ENCODE measurements at regions of chr1 and their contacts with region 1.

Region 1: DNA sequence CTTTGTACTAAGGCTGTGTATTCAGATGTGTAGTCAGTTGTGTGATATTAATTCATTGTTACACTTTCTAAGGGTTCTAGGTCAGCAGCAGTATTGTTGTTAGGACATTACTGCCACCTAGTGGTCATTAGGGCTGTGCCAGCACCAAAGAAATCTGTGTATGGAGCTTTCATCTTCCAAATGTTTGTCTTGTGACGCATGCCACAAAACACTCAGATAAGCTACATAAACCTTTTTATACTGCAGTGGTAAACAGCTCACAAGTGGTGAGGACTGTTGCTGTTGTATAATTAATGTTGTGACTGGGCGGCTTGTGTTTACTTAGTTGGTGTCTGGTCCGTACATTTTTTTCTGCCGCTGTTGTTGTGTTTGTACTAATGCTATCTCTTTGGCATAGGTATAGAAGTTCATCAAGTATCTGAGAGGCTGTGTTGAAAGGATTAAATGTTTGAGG is 51.7 kb downstream of the S1PR1 start:
- DNase-seq: peak; percentile 48 to 61
- H3K4me3 ChIP-seq: no peak overlapping the region
- H3K4me3 Mint-ChIP-seq: no peak overlapping the region
- H3K27ac Mint-ChIP-seq: no peak overlapping the region
- H3K4me1 ChIP-seq: no peaks in the 10 kb centered on the region
- H3K4me1 Mint-ChIP-seq: no peaks in the 10 kb centered on the region
- H3K27me3 ChIP-seq: no peaks in the 10 kb centered on the region
- H3K27me3 Mint-ChIP-seq: peaks cover 6% of the 10 kb centered on the region
- CTCF ChIP-seq: peak; percentile 64 to 71

Region 2: GRCh38 chr1:100921109-100921706 is 367.3 kb before region 1 on chr1:
- CTCF ChIA-PET with region 1: no interaction called
- POLR2A ChIA-PET with region 1: no interaction called
- intact Hi-C with region 1: loop called (anchors 1 kb)
- DNase-seq: peak in 1 of 2 experiments; percentile 42
- H3K4me3 ChIP-seq: no peak overlapping the region
- H3K4me3 Mint-ChIP-seq: no peak overlapping the region
- H3K27ac Mint-ChIP-seq: no peak overlapping the region
- H3K4me1 ChIP-seq: no peaks in the 10 kb centered on the region
- H3K4me1 Mint-ChIP-seq: no peaks in the 10 kb centered on the region
- H3K27me3 ChIP-seq: no peaks in the 10 kb centered on the region
- H3K27me3 Mint-ChIP-seq: no peaks in the 10 kb centered on the region
- CTCF ChIP-seq: peak; percentile 25 to 43

Region 3: GRCh38 chr1:101004061-101004460 is 284.5 kb before region 1 on chr1:
- CTCF ChIA-PET with region 1: no interaction called
- POLR2A ChIA-PET with region 1: no interaction called
- intact Hi-C with region 1: loop called (anchors 1 kb)
- DNase-seq: peak in 1 of 2 experiments; percentile 45
- H3K4me3 ChIP-seq: no peak overlapping the region
- H3K4me3 Mint-ChIP-seq: no peak overlapping the region
- H3K27ac Mint-ChIP-seq: no peak overlapping the region
- H3K4me1 ChIP-seq: peaks cover 16% of the 10 kb centered on the region
- H3K4me1 Mint-ChIP-seq: no peaks in the 10 kb centered on the region
- H3K27me3 ChIP-seq: no peaks in the 10 kb centered on the region
- H3K27me3 Mint-ChIP-seq: no peaks in the 10 kb centered on the region
- CTCF ChIP-seq: no peak

Region 4: DNA sequence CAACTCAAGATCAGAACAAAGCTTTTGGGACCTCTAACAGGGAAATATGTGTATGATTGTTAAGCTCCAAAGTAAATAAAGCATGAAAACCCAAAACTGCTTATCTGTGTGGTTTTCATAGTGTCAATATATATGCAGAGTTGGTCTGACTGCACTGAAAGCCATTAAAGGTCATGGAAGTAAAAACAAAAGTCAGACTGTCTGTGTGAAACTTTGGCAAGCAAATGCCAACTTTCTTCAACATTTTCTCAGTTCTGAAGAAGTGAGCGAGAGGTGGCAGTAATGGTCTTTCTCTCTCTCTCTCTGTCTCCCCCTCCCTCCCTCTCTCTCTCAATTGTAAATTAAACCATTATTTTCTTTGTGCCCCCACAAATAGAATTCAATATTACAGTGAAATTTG is 151.8 kb before region 1 on chr1:
- CTCF ChIA-PET with region 1: no interaction called
- POLR2A ChIA-PET with region 1: no interaction called
- intact Hi-C with region 1: loop called (anchors 2 kb)
- DNase-seq: no peak
- H3K4me3 ChIP-seq: no peak overlapping the region
- H3K4me3 Mint-ChIP-seq: no peak overlapping the region
- H3K27ac Mint-ChIP-seq: no peak overlapping the region
- H3K4me1 ChIP-seq: no peaks in the 10 kb centered on the region
- H3K4me1 Mint-ChIP-seq: peaks cover 6% of the 10 kb centered on the region
- H3K27me3 ChIP-seq: no peaks in the 10 kb centered on the region
- H3K27me3 Mint-ChIP-seq: peaks cover 2% of the 10 kb centered on the region
- CTCF ChIP-seq: no peak

Region 5: GRCh38 chr1:101238681-101239094 is 49.8 kb before region 1 on chr1:
- CTCF ChIA-PET with region 1: interaction called, 11 read pairs
- POLR2A ChIA-PET with region 1: no interaction called
- intact Hi-C with region 1: loop called (anchors 1 kb)
- DNase-seq: peak; percentile 69 to 77
- H3K4me3 ChIP-seq: no peak overlapping the region
- H3K4me3 Mint-ChIP-seq: no peak overlapping the region
- H3K27ac Mint-ChIP-seq: no peak overlapping the region
- H3K4me1 ChIP-seq: 0 out of 2 replicates have a peak, but pooled peaks cover 5% of the 10 kb centered on the region
- H3K4me1 Mint-ChIP-seq: peaks cover 12% of the 10 kb centered on the region
- H3K27me3 ChIP-seq: no peaks in the 10 kb centered on the region; the same call in 1 of the 2 replicates
- H3K27me3 Mint-ChIP-seq: peaks cover 20% of the 10 kb centered on the region
- CTCF ChIP-seq: peak; percentile 70 to 75

Measured in Caco-2 (cell line).